ENCODE measurements at regions of chr17 and their contacts with region 1.

Region 1: DNA sequence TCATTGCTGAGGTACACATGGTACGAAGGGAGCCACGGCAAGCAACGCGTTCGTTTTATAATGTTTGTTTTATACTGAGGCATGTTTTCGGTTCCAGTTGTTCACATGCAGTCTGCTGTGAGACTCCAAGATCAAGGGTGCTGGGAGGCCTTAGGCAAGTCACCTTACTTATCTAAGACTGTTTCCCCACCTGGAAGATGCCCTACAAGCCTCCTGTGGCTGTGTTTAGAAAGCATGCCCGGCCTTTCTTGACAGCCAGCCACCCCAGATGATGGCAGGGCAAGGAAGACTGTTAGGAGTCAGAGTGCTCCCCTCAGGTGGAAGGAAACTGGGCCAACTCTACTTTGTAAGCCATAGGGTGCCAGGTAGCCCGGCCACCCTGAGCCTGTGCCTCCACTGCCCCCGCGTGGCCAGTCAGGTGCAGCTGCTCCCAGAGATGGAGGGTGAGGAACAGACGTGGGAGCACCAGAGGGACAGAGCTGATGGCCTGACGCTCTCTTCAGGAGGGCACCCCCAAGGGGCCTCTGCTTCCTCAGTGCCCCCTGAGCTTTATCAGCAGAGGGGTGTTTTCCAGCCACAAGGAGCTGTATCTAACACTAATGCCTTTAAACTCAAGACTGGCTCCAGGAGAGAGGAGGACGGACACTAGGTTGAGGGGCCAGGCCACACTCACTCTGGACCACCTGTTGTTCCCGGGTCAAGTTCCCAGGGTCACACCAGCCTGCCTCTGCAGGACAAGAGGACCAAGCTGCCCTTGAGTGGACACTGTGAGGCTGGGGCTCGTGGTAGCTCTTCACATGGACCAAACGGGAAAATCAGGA is 5.4 kb downstream of the NAT9 start:
- DNase-seq: peak; percentile 54
- H3K4me3 Mint-ChIP-seq: no peak overlapping the region
- H3K27ac Mint-ChIP-seq: peak overlapping the region; percentile 48
- H3K4me1 Mint-ChIP-seq: peaks cover 31% of the 10 kb centered on the region
- H3K27me3 Mint-ChIP-seq: no peaks in the 10 kb centered on the region

Region 2: DNA sequence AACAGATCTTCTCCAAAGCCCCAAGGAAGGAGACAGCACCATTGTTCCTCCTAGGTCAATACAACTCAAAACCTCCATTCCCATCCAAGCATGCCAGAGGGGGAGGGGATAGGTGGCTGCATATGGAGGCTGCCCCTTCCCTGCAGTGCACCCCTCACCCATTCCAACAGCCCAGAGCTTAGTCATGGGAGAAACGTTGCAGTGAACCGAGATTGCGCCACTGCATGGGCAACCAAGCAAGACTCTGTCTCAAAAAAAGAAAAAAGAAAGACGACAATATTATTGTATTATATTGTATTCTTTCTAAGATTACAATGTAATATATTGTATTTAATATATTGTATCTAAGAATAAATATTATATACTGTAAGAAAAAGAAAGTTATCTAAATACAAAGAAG is 110.8 kb before region 1 on chr17:
- intact Hi-C with region 1: loop called (anchors 1 kb)
- DNase-seq: no peak
- H3K4me3 Mint-ChIP-seq: no peak overlapping the region
- H3K27ac Mint-ChIP-seq: no peak overlapping the region
- H3K4me1 Mint-ChIP-seq: peaks cover 8% of the 10 kb centered on the region
- H3K27me3 Mint-ChIP-seq: peaks cover 59% of the 10 kb centered on the region

Region 3: GRCh38 chr17:74790161-74791054 is 19.7 kb after region 1 on chr17:
- intact Hi-C with region 1: no loop called
- DNase-seq: no peak
- H3K4me3 Mint-ChIP-seq: no peak overlapping the region
- H3K27ac Mint-ChIP-seq: peak overlapping the region; percentile 47
- H3K4me1 Mint-ChIP-seq: peaks cover 39% of the 10 kb centered on the region
- H3K27me3 Mint-ChIP-seq: no peaks in the 10 kb centered on the region

Measured in activated T-helper 1 cell treated with anti-CD3 and anti-CD28 coated beads, Interleukin-12 subunit alpha, Interleukin-12 subunit beta, Interleukin-2, Interleukin-4 antibody, amounts not matched to agents 30 ng/mL and 10 ng/mL and 1 ng/mL, durations not matched to agents 14 hours and 24 hours and 36 hours (primary cell).